Activated naive CD4-positive, alpha-beta T cell treated with anti-CD3 and anti-CD28 coated beads for 36 hours (primary cell): ENCODE measurements at regions of chr4 and their contacts with region 1.

Region 1: DNA sequence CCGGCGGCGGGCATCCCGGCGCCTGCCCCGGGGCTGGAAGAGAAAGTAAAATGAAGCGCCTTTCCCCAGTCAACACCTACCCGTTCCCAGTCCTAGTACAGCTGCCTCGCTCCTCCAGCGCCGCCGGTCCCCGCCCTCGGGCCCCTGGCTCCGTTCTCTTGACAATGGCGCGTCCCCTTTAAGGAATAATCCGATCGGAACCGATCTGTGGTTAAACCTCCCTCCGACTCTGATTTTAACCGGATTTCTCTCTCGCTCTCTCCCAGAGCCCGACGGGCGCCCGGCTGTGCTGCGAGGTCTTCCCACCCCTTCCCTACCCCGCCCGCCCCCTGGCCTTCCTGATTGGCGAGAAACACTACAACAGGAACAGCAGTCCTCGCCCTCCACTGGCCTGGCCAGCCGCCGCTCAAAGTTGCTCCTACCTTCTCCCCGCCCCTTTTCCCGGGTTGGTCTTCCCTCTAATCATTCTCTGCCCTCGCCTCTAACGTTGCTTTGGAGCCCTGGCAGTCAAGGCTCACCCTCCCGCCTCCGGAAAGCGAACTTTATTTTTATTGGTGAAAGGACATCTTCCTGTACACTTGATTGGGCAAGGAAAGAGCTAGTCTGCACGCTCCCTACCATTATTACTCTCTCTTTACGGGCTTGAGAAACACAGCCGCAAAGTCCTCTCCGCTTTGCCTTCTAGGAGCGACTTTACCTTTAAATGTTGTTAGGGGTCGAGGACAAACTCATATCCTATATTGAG is at the start of gene FRYL:
- DNase-seq: peak; percentile 100
- H3K4me3 Mint-ChIP-seq: peak within 1 kb of the TSS; percentile 92
- H3K27ac Mint-ChIP-seq: peak within 1 kb of the TSS; percentile 98
- H3K4me1 Mint-ChIP-seq: peaks cover 41% of the 10 kb centered on the region
- H3K27me3 Mint-ChIP-seq: no peaks in the 10 kb centered on the region
- total RNA-seq, gene FRYL: 44.8 to 54.2 TPM

Region 2: DNA sequence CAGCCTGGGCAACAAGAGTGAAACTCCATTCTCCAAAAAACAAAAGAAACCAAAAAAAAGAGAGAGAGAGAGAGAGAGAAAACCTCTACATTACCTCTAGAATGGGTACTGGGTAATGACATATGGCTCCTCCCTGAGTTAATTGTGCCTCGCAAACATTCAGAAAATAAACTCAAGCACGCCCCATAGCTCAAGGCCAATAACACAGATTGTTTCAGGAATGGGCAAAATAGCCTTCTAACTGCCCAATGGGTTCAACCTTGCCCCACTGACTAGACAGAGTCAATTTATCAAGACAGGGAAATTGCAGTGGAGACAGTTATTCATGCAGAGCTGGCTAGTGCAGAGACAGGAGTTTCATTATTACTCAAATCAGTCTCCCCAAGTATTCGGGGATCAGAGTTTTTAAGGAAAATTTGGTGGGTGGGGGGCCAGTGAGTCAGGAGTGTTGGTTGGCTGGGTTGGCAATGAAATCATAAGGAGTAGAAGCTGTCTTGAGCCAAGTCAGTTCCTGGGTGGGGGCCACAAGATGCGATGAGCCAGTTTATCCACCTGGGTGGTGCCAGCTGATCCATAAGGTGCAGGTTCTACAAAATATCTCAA is 738.5 kb before region 1 on chr4:
- CTCF ChIA-PET with region 1: no interaction called
- intact Hi-C with region 1: loop called (anchors 5 kb)
- DNase-seq: no peak
- H3K4me3 Mint-ChIP-seq: no peak overlapping the region
- H3K27ac Mint-ChIP-seq: no peak overlapping the region
- H3K4me1 Mint-ChIP-seq: peaks cover 72% of the 10 kb centered on the region
- H3K27me3 Mint-ChIP-seq: no peaks in the 10 kb centered on the region

Region 3: GRCh38 chr4:48499551-48500066 is 280.6 kb before region 1 on chr4:
- CTCF ChIA-PET with region 1: no interaction called
- intact Hi-C with region 1: loop called (anchors 5 kb)
- DNase-seq: no peak
- H3K4me3 Mint-ChIP-seq: no peak overlapping the region
- H3K27ac Mint-ChIP-seq: no peak overlapping the region
- H3K4me1 Mint-ChIP-seq: peaks cover 16% of the 10 kb centered on the region
- H3K27me3 Mint-ChIP-seq: no peaks in the 10 kb centered on the region

Region 4: GRCh38 chr4:48681856-48682255 is 98.3 kb before region 1 on chr4:
- CTCF ChIA-PET with region 1: no interaction called
- intact Hi-C with region 1: loop called (anchors 1 kb)
- DNase-seq: peak; percentile 51
- H3K4me3 Mint-ChIP-seq: no peak overlapping the region
- H3K27ac Mint-ChIP-seq: peak overlapping the region; percentile 63
- H3K4me1 Mint-ChIP-seq: peaks cover 38% of the 10 kb centered on the region
- H3K27me3 Mint-ChIP-seq: no peaks in the 10 kb centered on the region

Region 5: DNA sequence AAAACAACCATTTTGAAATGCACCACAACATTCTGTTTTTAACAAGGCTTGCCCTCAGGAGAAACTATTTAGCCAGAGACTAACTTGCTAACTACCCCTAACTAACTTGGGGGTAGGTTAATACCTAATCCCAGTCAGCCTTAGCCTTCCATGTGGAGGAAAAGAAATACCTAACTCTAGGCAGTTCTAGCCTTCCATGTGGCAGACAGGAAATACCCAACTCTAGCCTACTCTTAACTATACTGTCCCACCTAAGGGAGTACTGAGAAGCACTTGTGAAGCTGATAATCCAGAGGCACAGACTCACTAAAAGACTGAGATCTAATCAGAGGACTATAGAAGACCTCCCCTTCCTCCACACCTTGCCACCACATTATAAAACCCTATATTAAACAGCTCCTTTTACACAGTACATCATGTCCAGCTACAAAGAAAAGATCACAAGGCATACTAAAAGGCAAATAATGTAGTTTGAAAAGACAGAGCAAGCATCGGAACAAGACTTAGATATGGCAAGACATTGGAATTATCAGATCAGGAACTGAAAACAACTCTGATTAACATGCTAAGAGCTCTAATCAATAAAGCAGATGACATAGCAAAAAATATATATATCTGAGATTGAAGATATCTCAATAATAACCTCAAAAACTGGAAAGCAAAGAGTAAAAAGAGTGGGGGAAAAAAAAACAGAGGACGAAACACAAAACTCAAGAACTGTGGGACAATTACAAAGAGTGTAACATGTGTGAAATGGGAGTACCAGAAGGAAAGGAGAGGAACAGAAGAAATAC is 52.3 kb before region 1 on chr4:
- CTCF ChIA-PET with region 1: no interaction called
- intact Hi-C with region 1: loop called (anchors 5 kb)
- DNase-seq: no peak
- H3K4me3 Mint-ChIP-seq: no peak overlapping the region
- H3K27ac Mint-ChIP-seq: no peak overlapping the region
- H3K4me1 Mint-ChIP-seq: peaks cover 87% of the 10 kb centered on the region
- H3K27me3 Mint-ChIP-seq: no peaks in the 10 kb centered on the region

Region 6: GRCh38 chr4:48898733-48899431 is 118.7 kb after region 1 on chr4:
- CTCF ChIA-PET with region 1: no interaction called
- intact Hi-C with region 1: loop called (anchors 2 kb)
- DNase-seq: no peak
- H3K4me3 Mint-ChIP-seq: peak overlapping the region; percentile 16
- H3K27ac Mint-ChIP-seq: peak overlapping the region; percentile 77
- H3K4me1 Mint-ChIP-seq: peaks cover 35% of the 10 kb centered on the region
- H3K27me3 Mint-ChIP-seq: no peaks in the 10 kb centered on the region